ENCODE measurements at regions of chr12 and their contacts with region 1.

Region 1: GRCh38 chr12:72888693-72889092 is 616.5 kb downstream of the TRHDE start:
- DNase-seq: no peak
- H3K4me3 ChIP-seq: no peak overlapping the region
- H3K27ac ChIP-seq: no peak overlapping the region
- H3K4me1 ChIP-seq: no peaks in the 10 kb centered on the region
- H3K27me3 ChIP-seq: no peaks in the 10 kb centered on the region
- CTCF ChIP-seq: no peak
- EP300 ChIP-seq: no peak
- POLR2A ChIP-seq: no peak

Region 2: GRCh38 chr12:72610854-72611358 is 277.8 kb before region 1 on chr12:
- intact Hi-C with region 1: no loop called
- DNase-seq: no peak
- H3K4me3 ChIP-seq: no peak overlapping the region
- H3K27ac ChIP-seq: no peak overlapping the region
- H3K4me1 ChIP-seq: no peaks in the 10 kb centered on the region
- H3K27me3 ChIP-seq: no peaks in the 10 kb centered on the region
- CTCF ChIP-seq: no peak
- EP300 ChIP-seq: no peak
- POLR2A ChIP-seq: no peak

Region 3: DNA sequence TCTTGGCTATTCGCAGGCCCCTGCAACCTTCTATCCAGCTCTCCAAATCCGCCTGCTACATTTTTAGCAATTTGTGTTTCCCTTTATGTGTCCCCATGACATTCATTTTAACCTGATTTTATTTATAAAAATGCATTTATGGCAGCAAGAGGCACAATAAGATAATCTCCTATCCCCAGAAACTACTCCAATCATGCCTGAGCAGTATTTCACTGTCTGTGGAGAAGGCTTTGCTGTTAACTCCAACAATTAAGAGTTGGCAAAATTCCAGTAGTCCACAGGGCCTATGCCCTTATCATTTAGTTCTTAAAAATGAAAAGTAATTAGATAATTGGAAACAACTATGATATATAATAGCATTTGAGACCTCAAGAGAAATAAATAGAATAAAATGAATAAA is 154.1 kb before region 1 on chr12:
- intact Hi-C with region 1: loop called (anchors 5 kb)
- DNase-seq: no peak
- H3K4me3 ChIP-seq: no peak overlapping the region
- H3K27ac ChIP-seq: no peak overlapping the region
- H3K4me1 ChIP-seq: no peaks in the 10 kb centered on the region
- H3K27me3 ChIP-seq: no peaks in the 10 kb centered on the region
- CTCF ChIP-seq: no peak
- EP300 ChIP-seq: no peak
- POLR2A ChIP-seq: no peak

Region 4: GRCh38 chr12:72815135-72815820 is 73.4 kb before region 1 on chr12:
- intact Hi-C with region 1: no loop called
- DNase-seq: no peak
- H3K4me3 ChIP-seq: no peak overlapping the region
- H3K27ac ChIP-seq: no peak overlapping the region
- H3K4me1 ChIP-seq: no peaks in the 10 kb centered on the region
- H3K27me3 ChIP-seq: no peaks in the 10 kb centered on the region
- CTCF ChIP-seq: no peak
- EP300 ChIP-seq: no peak
- POLR2A ChIP-seq: no peak

Region 5: GRCh38 chr12:73057426-73057825 is 168.7 kb after region 1 on chr12:
- intact Hi-C with region 1: no loop called
- DNase-seq: no peak
- H3K4me3 ChIP-seq: no peak overlapping the region
- H3K27ac ChIP-seq: no peak overlapping the region
- H3K4me1 ChIP-seq: no peaks in the 10 kb centered on the region
- H3K27me3 ChIP-seq: no peaks in the 10 kb centered on the region
- CTCF ChIP-seq: no peak
- EP300 ChIP-seq: no peak
- POLR2A ChIP-seq: no peak

Region 6: DNA sequence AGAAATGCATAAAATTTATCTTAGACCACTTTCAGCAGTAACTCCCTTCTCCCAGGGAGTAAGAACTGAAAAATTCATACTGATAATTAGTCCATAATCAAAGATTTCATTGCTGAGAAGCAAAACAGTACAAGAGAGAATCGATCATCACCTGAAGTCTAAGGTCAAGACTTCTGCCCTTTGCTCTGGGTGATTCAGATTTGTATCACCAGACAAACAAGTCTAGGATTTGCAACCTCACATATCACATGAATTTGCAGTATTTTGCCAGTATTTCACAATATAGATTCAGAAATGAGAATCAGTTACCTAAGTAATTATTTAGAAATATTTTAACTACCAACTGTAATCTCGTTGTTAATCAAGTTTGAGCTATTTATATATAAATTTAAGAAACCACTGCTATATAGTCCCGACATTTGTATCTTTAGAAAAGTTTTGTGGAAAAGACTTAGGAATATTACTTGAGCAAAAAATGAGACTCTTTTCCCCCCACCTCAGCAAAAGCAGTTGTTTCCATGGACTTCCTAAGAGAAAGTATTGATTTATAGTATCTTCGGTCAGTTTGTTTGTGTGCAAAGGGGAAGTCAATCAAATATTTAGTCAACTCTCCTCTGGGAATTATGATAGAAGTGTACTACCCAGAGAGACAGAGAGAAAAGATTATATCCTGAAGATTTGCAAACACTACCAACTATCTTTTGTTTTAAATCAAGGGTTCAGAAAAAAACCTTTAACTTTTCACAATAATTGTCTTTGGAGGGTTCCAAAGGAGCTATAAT is 223.5 kb after region 1 on chr12:
- intact Hi-C with region 1: no loop called
- DNase-seq: no peak
- H3K4me3 ChIP-seq: no peak overlapping the region
- H3K27ac ChIP-seq: no peak overlapping the region
- H3K4me1 ChIP-seq: no peaks in the 10 kb centered on the region
- H3K27me3 ChIP-seq: no peaks in the 10 kb centered on the region
- CTCF ChIP-seq: no peak
- EP300 ChIP-seq: no peak
- POLR2A ChIP-seq: no peak